ENCODE measurements at regions of chr14 and their contacts with region 1.

Region 1: DNA sequence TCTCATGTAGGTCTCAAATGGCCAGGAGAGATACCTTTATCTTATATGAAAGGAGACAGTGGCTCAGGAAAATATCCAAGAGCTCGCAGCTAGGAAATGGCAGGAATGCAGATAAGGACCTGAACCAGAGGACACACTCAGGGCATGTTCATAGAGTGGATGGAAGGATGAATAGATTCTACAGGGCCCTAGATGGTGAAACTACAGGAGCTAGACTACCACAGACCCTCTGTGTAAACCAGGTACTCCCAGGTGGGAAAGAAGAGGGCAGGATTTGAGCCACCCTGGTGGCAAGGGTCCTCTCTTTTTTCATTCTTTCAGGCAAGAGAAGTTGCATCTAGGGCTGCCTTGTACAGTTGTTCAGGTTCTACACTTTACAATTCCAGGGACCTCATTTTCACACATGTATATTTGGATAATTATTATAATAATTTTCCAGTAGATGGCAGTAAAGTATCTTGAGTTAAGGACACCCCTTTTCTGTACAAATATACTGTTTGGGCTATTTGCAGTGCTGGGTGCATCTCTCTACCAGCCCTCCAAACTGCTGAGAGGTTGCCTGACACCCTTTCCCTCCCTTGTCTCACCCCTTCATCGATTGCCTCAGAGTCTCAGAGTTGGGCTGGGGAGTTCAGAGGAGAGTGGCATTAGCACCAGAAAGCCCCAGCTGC is 10.5 kb upstream of the ZDHHC22 start:
- DNase-seq: no peak
- ATAC-seq: no peak
- H3K4me3 Mint-ChIP-seq: no peak overlapping the region
- H3K27ac Mint-ChIP-seq: no peak overlapping the region
- H3K4me1 Mint-ChIP-seq: peaks cover 34% of the 10 kb centered on the region
- H3K27me3 Mint-ChIP-seq: no peaks in the 10 kb centered on the region
- CTCF ChIP-seq: no peak

Region 2: DNA sequence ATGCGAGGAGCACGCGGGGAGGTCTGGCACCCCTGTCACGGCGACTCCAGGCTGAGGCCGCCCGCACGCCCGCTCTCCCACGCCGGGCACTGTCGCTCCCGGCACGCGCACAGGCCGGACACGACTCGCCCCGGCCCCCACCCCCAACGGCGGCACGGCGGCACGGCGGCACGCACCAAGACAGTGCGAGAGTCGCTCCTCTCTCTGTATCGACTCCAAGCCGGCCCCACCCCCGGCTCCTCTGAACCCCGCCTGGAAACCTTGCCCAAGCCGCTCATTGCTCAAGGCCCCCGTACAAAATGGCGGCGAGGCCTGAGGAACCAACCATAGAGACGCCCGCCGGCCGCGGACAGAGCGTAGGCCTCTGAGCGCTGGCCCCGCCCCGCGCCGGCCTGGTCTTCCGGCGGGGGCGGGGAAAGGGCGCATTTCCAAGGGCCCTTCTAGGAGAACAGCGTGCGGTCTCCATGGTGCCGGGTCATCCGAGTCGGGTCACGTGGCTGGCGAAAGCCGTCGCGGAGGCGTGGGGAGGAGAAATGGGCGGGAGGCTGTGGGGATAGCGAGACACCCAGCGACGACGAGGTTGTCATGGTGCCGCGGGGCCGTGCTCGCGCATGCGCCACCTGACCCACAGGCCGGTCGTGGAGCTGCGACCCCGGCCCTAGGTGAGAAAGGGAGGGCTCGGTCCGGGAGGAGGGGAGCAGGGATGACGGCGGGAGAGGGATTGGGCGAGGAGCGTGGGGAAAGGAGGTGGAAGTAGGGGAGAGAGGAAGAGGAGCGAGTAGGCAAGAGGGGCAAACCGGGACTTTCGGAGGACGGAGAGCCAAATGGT is 54.1 kb before region 1 on chr14 and contains the start of gene CIPC:
- CTCF ChIA-PET with region 1: interaction called, 11 read pairs
- POLR2A ChIA-PET with region 1: no interaction called
- DNase-seq: peak; percentile 97
- ATAC-seq: peak; percentile 94
- H3K4me3 Mint-ChIP-seq: peak within 1 kb of the TSS; percentile 84
- H3K27ac Mint-ChIP-seq: peak within 1 kb of the TSS; percentile 95
- H3K4me1 Mint-ChIP-seq: peaks cover 52% of the 10 kb centered on the region
- H3K27me3 Mint-ChIP-seq: no peaks in the 10 kb centered on the region
- CTCF ChIP-seq: no peak
- total RNA-seq, gene CIPC: 22.5 to 25.4 TPM (median 24.2 TPM) in 3 replicates

Region 3: DNA sequence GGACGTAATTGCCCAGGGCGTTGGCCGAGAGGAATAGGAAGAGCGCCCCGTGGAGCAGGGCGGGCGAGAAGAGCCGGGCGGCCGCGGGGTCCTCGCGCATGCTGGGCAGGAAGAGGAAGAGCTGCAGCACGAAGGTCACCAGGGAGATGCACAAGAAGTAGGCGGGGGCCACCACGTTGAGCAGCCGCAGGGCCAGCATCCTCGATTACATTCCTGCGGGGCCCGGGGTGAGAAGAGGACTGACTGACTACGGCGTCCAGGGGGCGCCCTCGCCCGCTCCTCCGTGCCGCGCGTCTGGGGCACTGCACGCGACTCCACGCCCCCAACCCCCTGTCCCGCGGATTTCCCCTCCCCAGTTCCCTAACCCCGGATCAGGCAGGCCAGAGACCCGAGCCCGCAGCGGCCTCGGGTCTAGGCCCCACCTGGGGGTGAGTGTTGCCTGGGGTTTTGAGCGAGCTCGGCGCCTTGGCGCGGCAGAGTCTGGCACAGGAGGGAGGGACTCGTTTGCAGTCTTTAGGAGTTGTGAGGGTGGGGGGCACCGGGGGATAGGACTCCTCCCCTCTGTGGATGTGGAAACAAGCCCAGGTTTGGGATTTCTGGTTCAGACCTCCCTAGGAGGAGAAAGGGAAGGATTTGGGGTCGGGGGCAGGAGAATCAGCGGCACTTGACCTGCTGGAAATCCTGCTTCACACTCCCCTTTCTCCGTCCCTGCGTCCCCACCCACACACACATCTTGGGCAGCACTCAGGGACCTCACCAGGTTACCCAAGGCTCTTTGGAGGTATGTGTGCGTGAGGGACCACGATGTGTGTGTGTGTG is 12.3 kb before region 1 on chr14:
- CTCF ChIA-PET with region 1: interaction called, 147 read pairs
- POLR2A ChIA-PET with region 1: interaction called, 7 read pairs
- DNase-seq: peak; percentile 90
- ATAC-seq: peak; percentile 58
- H3K4me3 Mint-ChIP-seq: peak overlapping the region; percentile 92
- H3K27ac Mint-ChIP-seq: peak overlapping the region; percentile 32; the same call in 1 of the 2 replicates
- H3K4me1 Mint-ChIP-seq: peaks cover 42% of the 10 kb centered on the region
- H3K27me3 Mint-ChIP-seq: peaks cover 4% of the 10 kb centered on the region; the same call in 1 of the 2 replicates
- CTCF ChIP-seq: peak; percentile 75

Region 4: DNA sequence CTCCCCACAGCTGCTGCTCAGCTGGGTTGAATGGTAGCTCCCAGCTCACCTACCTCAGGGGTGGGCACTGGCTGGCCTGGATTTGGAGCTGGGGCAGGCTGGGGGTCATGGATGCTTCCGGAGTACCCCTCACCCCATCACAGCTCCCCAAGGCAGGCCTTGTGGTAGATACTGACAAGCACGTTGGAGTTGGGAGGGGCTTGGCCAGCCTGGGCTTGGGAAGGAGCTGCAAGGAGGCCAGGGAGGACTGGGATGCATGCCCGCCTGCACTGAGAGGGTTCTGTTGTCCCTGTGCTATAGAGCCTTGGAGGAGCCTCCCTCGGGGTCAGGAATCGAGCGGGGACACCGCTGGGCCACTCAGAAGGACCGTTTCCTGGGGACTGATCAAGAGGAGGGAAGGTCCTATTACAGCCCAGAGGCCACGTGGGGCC is 43.7 kb after region 1 on chr14:
- CTCF ChIA-PET with region 1: interaction called, 12 read pairs
- POLR2A ChIA-PET with region 1: no interaction called
- DNase-seq: no peak
- ATAC-seq: no peak
- H3K4me3 Mint-ChIP-seq: no peak overlapping the region
- H3K27ac Mint-ChIP-seq: no peak overlapping the region
- H3K4me1 Mint-ChIP-seq: peaks cover 3% of the 10 kb centered on the region
- H3K27me3 Mint-ChIP-seq: peaks cover 5% of the 10 kb centered on the region; the same call in 1 of the 2 replicates
- CTCF ChIP-seq: no peak

Region 5: DNA sequence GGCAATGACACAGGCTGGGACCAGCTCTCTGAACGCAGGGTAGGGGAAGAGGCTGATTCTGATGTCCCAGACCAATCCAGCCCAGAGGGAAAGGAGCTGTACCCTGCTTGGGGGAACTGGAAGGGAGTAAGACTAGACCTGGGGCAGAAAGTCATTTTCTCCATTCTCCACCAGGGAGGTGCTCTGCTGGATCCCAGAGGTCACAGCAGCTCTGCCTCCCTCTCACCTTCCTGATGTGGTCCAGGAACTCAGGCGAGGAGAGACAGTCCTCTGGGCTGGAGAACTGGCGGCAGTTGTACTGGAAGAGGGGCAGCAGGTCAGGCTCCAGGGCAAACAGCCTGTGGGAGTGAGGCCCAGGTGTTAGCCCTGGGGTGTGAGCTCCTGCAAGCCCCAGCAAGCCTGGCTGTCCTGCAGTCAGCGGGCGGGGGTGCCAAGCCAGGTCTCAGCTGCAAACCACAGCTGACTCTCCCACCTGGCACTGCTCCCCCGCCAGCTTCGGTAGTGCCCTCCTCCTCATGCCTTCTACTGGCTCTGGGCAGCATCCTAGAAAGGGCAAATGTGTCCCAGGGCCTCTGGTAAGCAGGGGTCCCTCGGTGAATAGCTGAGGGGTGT is 117.0 kb after region 1 on chr14:
- CTCF ChIA-PET with region 1: interaction called, 10 read pairs
- POLR2A ChIA-PET with region 1: no interaction called
- DNase-seq: no peak
- ATAC-seq: peak; percentile 31
- H3K4me3 Mint-ChIP-seq: no peak overlapping the region; the same call in 1 of the 2 replicates
- H3K27ac Mint-ChIP-seq: no peak overlapping the region
- H3K4me1 Mint-ChIP-seq: peaks cover 8% of the 10 kb centered on the region
- H3K27me3 Mint-ChIP-seq: peaks cover 61% of the 10 kb centered on the region
- CTCF ChIP-seq: no peak

Region 6: DNA sequence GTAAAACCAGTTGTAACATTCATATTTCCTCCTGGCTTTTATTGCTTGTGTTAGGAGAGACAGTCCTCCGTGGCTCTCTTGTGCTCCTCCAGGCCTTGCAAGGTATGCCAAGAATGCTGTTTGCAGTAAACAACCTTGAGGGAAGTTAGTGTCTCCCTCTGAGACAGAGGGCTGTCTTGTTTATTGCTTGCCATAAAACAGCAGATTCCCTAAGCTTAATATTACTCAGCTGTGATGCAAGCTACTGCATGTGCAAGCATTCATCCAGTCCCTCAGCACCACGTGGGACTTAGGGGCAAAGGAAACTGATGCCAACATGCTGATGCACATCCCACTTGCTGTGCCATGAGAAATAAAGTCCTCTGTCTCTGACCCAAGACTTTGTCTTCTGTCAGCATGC is 162.0 kb after region 1 on chr14:
- CTCF ChIA-PET with region 1: interaction called, 43 read pairs
- POLR2A ChIA-PET with region 1: no interaction called
- DNase-seq: no peak
- ATAC-seq: peak; percentile 78
- H3K4me3 Mint-ChIP-seq: no peak overlapping the region
- H3K27ac Mint-ChIP-seq: peak overlapping the region; percentile 97
- H3K4me1 Mint-ChIP-seq: peaks cover 34% of the 10 kb centered on the region
- H3K27me3 Mint-ChIP-seq: no peaks in the 10 kb centered on the region
- CTCF ChIP-seq: no peak

Measured in WTC11 (cell line).